ENCODE measurements at regions of chr2 and their contacts with region 1.

Region 1: DNA sequence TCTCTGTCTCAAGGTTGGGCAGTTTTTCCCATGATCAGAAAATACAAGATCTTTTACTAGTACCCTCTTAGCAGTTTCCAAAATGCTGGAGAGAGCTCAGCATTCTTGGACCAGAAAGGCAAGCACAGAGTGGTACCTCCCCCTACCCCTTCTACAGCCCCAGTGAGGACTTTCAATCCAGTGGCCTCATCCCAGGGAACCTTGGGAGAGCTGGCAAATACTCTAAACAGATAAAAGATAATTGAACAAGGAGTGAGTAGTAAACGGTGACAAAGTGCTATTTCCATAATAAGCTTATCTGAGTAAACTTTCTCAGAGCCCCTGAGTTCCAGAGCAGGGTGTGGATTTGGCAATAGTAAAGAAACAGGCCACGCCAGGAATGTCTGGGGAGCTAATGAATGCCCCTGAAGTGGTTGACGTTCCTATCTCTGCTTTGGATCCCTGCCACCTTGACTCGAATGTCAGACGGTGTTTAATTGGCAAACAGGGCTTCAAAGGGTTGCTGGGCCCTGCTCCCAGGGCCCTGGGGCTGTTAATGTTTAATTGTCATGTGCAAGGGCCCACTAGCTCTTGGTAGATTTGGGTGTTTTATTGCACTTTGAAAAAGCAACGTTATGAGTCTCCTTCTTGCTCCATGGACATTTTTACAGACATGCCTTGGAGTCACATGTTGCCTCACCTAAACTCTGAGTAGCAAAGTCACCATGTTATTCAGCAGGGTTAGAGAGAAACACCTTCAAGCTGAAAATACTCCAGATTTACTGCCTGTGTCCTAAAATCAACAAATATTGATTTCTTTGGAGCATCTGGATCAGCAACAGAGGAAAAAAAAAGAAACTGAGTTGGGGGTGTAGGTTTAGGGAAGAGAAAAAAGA is 239.9 kb downstream of the CYRIA start:
- DNase-seq: peak; percentile 97 to 99
- H3K4me3 ChIP-seq: no peak overlapping the region
- H3K4me3 Mint-ChIP-seq: peak overlapping the region; percentile 55
- H3K27ac Mint-ChIP-seq: peak overlapping the region; percentile 99
- H3K4me1 ChIP-seq: peaks cover 46% of the 10 kb centered on the region
- H3K4me1 Mint-ChIP-seq: peaks cover 58% of the 10 kb centered on the region
- H3K27me3 ChIP-seq: no peaks in the 10 kb centered on the region
- H3K27me3 Mint-ChIP-seq: no peaks in the 10 kb centered on the region
- CTCF ChIP-seq: no peak

Region 2: GRCh38 chr2:15776629-15776919 is 649.1 kb before region 1 on chr2:
- CTCF ChIA-PET with region 1: no interaction called
- POLR2A ChIA-PET with region 1: no interaction called
- intact Hi-C with region 1: loop called (anchors 1 kb)
- DNase-seq: peak; percentile 77 to 79
- H3K4me3 ChIP-seq: no peak overlapping the region
- H3K4me3 Mint-ChIP-seq: no peak overlapping the region
- H3K27ac Mint-ChIP-seq: peak overlapping the region; percentile 25
- H3K4me1 ChIP-seq: peaks cover 43% of the 10 kb centered on the region
- H3K4me1 Mint-ChIP-seq: peaks cover 45% of the 10 kb centered on the region
- H3K27me3 ChIP-seq: no peaks in the 10 kb centered on the region
- H3K27me3 Mint-ChIP-seq: no peaks in the 10 kb centered on the region
- CTCF ChIP-seq: no peak

Region 3: GRCh38 chr2:16114836-16115235 is 310.9 kb before region 1 on chr2:
- CTCF ChIA-PET with region 1: no interaction called
- POLR2A ChIA-PET with region 1: no interaction called
- intact Hi-C with region 1: loop called (anchors 1 kb)
- DNase-seq: peak; percentile 83 to 88
- H3K4me3 ChIP-seq: no peak overlapping the region
- H3K4me3 Mint-ChIP-seq: no peak overlapping the region
- H3K27ac Mint-ChIP-seq: no peak overlapping the region
- H3K4me1 ChIP-seq: peaks cover 36% of the 10 kb centered on the region
- H3K4me1 Mint-ChIP-seq: peaks cover 12% of the 10 kb centered on the region
- H3K27me3 ChIP-seq: no peaks in the 10 kb centered on the region
- H3K27me3 Mint-ChIP-seq: no peaks in the 10 kb centered on the region
- CTCF ChIP-seq: no peak

Region 4: DNA sequence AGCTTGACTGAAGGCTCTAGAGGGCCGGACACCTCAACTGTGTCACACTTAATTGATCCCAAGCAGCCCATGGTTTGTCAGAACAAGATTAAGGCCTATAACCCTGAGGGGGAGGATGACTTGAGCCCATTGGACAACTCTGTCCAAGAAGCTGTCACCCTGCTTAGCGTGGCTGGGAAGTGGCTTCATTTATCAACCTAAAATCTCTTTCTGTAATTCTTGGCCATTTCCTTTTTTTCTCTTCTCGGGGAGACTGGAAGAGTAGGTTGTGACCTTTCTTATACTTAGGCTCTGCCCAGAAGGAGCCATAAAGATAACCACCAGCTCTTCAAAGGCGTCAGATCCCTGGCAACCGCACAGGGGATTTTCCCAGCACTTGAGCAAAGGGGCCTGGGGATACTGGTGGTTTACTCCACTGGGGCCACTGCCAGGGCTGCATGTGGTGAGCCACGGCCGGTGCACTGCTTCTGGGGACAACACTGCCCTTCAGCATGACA is 25.5 kb before region 1 on chr2:
- CTCF ChIA-PET with region 1: interaction called, 3 read pairs
- POLR2A ChIA-PET with region 1: interaction called, 9 read pairs
- intact Hi-C with region 1: loop called (anchors 1 kb)
- DNase-seq: peak; percentile 84 to 91
- H3K4me3 ChIP-seq: no peak overlapping the region
- H3K4me3 Mint-ChIP-seq: no peak overlapping the region
- H3K27ac Mint-ChIP-seq: peak overlapping the region; percentile 80
- H3K4me1 ChIP-seq: peaks cover 46% of the 10 kb centered on the region
- H3K4me1 Mint-ChIP-seq: peaks cover 31% of the 10 kb centered on the region
- H3K27me3 ChIP-seq: no peaks in the 10 kb centered on the region
- H3K27me3 Mint-ChIP-seq: no peaks in the 10 kb centered on the region
- CTCF ChIP-seq: no peak

Region 5: DNA sequence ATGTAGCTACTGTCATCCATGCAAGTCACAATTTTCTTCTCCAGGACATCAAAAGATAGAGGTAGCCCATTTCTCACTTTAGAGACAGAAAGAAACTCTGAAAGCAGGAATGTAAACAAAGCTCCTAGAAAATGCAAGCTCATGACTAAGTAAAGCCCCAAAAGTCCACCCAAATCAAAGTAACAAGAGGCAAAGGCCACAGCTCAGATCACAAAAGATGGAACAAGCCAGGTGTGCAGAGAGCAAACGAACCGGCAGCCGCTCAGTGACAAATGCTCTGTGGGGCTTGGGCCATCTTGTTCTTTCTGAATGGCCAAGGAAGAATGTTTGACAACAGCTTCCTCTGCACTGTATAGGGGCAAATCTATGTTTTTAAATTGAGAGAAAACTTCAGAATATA is 38.9 kb after region 1 on chr2:
- CTCF ChIA-PET with region 1: interaction called, 5 read pairs
- POLR2A ChIA-PET with region 1: interaction called, 11 read pairs
- intact Hi-C with region 1: loop called (anchors 2 kb)
- DNase-seq: peak; percentile 56 to 65
- H3K4me3 ChIP-seq: no peak overlapping the region
- H3K4me3 Mint-ChIP-seq: peak overlapping the region; percentile 26
- H3K27ac Mint-ChIP-seq: peak overlapping the region; percentile 58
- H3K4me1 ChIP-seq: peaks cover 24% of the 10 kb centered on the region
- H3K4me1 Mint-ChIP-seq: peaks cover 23% of the 10 kb centered on the region
- H3K27me3 ChIP-seq: no peaks in the 10 kb centered on the region
- H3K27me3 Mint-ChIP-seq: no peaks in the 10 kb centered on the region
- CTCF ChIP-seq: no peak

Region 6: GRCh38 chr2:16608661-16609643 is 183.3 kb after region 1 on chr2:
- CTCF ChIA-PET with region 1: interaction called, 3 read pairs
- POLR2A ChIA-PET with region 1: no interaction called
- intact Hi-C with region 1: loop called (anchors 5 kb)
- DNase-seq: peak; percentile 86 to 92
- H3K4me3 ChIP-seq: peak overlapping the region; percentile 53
- H3K4me3 Mint-ChIP-seq: peak overlapping the region; percentile 77
- H3K27ac Mint-ChIP-seq: peak overlapping the region; percentile 34
- H3K4me1 ChIP-seq: no peaks in the 10 kb centered on the region
- H3K4me1 Mint-ChIP-seq: peaks cover 7% of the 10 kb centered on the region
- H3K27me3 ChIP-seq: no peaks in the 10 kb centered on the region
- H3K27me3 Mint-ChIP-seq: peaks cover 7% of the 10 kb centered on the region
- CTCF ChIP-seq: peak; percentile 93 to 95